ENCODE measurements at regions of chr10 and their contacts with region 1.

Region 1: DNA sequence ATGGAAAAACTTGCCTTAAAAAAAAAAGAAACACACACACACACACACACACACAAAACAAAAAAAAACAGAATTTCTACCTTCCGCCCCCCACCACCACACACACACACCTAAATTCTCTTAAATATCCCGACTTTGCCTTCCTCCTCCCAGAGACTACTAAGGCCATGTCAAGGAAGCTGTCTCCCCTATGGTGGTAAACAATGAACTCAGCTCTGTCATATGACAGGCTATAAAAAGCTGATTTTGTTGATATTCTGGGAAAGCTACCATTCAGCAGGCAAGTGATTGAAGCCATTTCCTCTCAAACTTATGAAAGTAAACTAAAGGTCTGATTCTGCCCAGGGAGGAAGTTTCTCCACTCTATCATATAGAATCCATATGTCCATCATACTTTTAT is 471.0 kb downstream of the GFRA1 start:
- DNase-seq: no peak
- H3K4me3 Mint-ChIP-seq: no peak overlapping the region
- H3K27ac Mint-ChIP-seq: no peak overlapping the region
- H3K4me1 Mint-ChIP-seq: no peaks in the 10 kb centered on the region
- H3K27me3 Mint-ChIP-seq: no peaks in the 10 kb centered on the region
- CTCF ChIP-seq: no peak

Region 2: DNA sequence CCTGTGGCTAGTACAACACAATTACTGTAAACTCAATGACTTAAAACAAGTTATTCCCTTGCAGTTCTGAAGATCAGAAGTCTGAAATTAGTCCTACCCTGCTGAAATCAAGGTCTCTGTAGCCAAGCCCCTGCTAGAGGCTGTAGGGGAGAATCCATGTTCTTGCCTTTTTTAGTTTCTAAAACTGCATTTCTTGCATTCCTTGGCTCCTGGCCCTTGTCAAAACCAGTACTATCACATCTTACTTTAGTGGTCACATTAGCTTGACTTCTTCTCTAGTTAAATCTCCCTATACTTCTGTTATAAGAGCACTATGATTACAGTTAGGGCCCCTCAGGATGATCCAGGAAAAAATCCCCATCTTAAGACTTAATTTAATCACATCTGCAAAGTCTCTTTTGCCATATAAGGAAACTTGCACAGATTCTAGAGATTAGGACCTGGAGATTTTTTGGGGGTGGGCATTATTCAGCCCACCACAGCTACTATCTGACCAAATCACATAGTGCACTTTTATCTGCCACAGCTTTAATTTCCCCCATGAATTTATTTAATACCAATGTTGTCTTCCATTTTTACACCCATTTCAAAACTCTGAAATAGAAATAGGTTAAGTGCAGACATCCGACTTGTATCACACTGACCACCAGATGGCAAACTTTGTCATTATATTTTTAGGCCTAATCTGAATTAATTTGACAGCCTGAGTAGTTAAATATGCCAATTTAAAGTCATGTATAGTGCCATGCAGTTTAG is 95.8 kb before region 1 on chr10:
- CTCF ChIA-PET with region 1: interaction called, 13 read pairs
- POLR2A ChIA-PET with region 1: no interaction called
- intact Hi-C with region 1: loop called (anchors 5 kb)
- DNase-seq: peak; percentile 50
- H3K4me3 Mint-ChIP-seq: no peak overlapping the region
- H3K27ac Mint-ChIP-seq: no peak overlapping the region
- H3K4me1 Mint-ChIP-seq: peaks cover 9% of the 10 kb centered on the region
- H3K27me3 Mint-ChIP-seq: no peaks in the 10 kb centered on the region
- CTCF ChIP-seq: peak; percentile 56

Region 3: DNA sequence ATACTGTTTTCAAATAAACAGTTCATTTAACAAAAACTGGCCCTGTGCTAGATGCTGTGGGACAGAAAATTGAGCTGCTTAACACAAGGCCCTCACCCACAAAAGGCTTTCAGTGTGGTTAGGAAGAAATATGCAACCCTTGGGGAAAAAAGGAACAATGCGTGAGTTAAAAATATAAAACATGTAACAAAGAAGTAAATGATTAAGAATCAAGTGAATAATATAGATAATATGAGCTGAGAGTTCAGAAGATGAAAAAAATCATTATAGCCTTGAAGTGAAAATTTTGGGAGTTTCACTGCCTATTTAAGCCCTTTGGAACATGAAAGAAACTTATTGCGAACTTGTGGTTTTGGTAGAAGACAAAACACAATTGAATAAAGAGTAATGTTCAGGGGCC is 24.3 kb before region 1 on chr10:
- CTCF ChIA-PET with region 1: interaction called, 21 read pairs
- POLR2A ChIA-PET with region 1: no interaction called
- intact Hi-C with region 1: no loop called
- DNase-seq: no peak
- H3K4me3 Mint-ChIP-seq: no peak overlapping the region
- H3K27ac Mint-ChIP-seq: no peak overlapping the region
- H3K4me1 Mint-ChIP-seq: peaks cover 11% of the 10 kb centered on the region
- H3K27me3 Mint-ChIP-seq: no peaks in the 10 kb centered on the region
- CTCF ChIP-seq: no peak

Region 4: DNA sequence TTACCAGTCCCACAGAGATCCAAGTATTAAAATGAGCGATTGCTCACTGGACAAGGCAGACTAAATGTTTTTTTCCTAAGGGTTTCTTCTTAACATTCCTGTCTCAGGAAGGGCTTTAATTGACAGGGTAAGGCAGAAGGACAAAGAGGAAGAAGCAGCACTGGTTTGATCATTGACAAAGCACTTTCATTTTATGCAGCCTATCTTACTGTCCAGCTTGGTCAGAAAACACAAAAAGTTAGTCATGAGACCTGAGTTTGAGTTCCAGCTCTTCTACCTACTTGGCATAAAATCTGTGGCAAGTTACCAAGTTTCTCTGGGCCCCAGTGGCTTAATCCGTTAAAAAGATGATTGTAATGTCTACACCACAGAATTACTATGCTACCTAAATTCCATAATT is 12.6 kb after region 1 on chr10:
- CTCF ChIA-PET with region 1: interaction called, 21 read pairs
- POLR2A ChIA-PET with region 1: no interaction called
- intact Hi-C with region 1: no loop called
- DNase-seq: no peak
- H3K4me3 Mint-ChIP-seq: no peak overlapping the region
- H3K27ac Mint-ChIP-seq: no peak overlapping the region
- H3K4me1 Mint-ChIP-seq: peaks cover 6% of the 10 kb centered on the region
- H3K27me3 Mint-ChIP-seq: no peaks in the 10 kb centered on the region
- CTCF ChIP-seq: no peak

Region 5: GRCh38 chr10:115844591-115844990 is 42.6 kb after region 1 on chr10:
- CTCF ChIA-PET with region 1: interaction called, 14 read pairs
- POLR2A ChIA-PET with region 1: no interaction called
- intact Hi-C with region 1: no loop called
- DNase-seq: no peak
- H3K4me3 Mint-ChIP-seq: no peak overlapping the region
- H3K27ac Mint-ChIP-seq: no peak overlapping the region
- H3K4me1 Mint-ChIP-seq: peaks cover 14% of the 10 kb centered on the region
- H3K27me3 Mint-ChIP-seq: no peaks in the 10 kb centered on the region
- CTCF ChIP-seq: no peak

Region 6: GRCh38 chr10:116080553-116080952 is 278.6 kb after region 1 on chr10:
- CTCF ChIA-PET with region 1: no interaction called
- POLR2A ChIA-PET with region 1: no interaction called
- intact Hi-C with region 1: no loop called
- DNase-seq: peak; percentile 49
- H3K4me3 Mint-ChIP-seq: no peak overlapping the region
- H3K27ac Mint-ChIP-seq: no peak overlapping the region
- H3K4me1 Mint-ChIP-seq: no peaks in the 10 kb centered on the region
- H3K27me3 Mint-ChIP-seq: peaks cover 3% of the 10 kb centered on the region
- CTCF ChIP-seq: no peak

Region 7: GRCh38 chr10:116287906-116288501 is 486.0 kb after region 1 on chr10:
- CTCF ChIA-PET with region 1: interaction called, 59 read pairs
- POLR2A ChIA-PET with region 1: no interaction called
- intact Hi-C with region 1: loop called (anchors 1 kb)
- DNase-seq: peak; percentile 56
- H3K4me3 Mint-ChIP-seq: no peak overlapping the region
- H3K27ac Mint-ChIP-seq: no peak overlapping the region
- H3K4me1 Mint-ChIP-seq: no peaks in the 10 kb centered on the region
- H3K27me3 Mint-ChIP-seq: peaks cover 34% of the 10 kb centered on the region
- CTCF ChIP-seq: peak; percentile 64